ENCODE measurements at regions of chr20 and their contacts with region 1.

Region 1: DNA sequence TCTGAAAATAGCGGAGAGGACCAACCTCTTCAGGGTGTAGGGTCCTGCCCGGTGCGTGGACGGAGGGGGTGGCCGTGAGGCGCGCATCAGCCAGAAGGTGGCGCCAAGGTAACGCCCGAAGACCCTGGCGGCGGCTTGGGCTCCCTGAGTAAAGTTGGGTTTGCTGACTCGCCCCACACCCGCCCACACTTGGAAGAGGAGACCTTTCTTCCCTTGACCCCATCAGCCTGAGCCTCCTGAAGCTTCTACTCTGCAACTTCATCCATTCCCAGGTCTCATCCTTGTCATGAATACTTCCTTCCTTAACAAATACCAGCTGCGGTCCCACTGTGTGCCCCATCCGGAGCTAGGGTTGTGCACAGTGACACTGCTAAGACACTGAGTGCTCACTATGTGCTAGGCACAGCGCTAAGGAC is 14.6 kb downstream of the CD40 start:
- DNase-seq: peak; percentile 78
- ATAC-seq: peak; percentile 83
- H3K4me3 ChIP-seq: no peak overlapping the region
- H3K4me3 Mint-ChIP-seq: peak overlapping the region; percentile 4
- H3K27ac ChIP-seq: no peak overlapping the region
- H3K27ac Mint-ChIP-seq: peak overlapping the region; percentile 33
- H3K4me1 ChIP-seq: peaks cover 20 to 42% of the 10 kb centered on the region in 2 donors
- H3K4me1 Mint-ChIP-seq: peaks cover 48% of the 10 kb centered on the region
- H3K27me3 ChIP-seq: peaks cover 0 to 10% (median 0%) of the 10 kb centered on the region in 4 experiments
- H3K27me3 Mint-ChIP-seq: peaks cover 15% of the 10 kb centered on the region
- CTCF ChIP-seq: peak; percentile 87

Region 2: DNA sequence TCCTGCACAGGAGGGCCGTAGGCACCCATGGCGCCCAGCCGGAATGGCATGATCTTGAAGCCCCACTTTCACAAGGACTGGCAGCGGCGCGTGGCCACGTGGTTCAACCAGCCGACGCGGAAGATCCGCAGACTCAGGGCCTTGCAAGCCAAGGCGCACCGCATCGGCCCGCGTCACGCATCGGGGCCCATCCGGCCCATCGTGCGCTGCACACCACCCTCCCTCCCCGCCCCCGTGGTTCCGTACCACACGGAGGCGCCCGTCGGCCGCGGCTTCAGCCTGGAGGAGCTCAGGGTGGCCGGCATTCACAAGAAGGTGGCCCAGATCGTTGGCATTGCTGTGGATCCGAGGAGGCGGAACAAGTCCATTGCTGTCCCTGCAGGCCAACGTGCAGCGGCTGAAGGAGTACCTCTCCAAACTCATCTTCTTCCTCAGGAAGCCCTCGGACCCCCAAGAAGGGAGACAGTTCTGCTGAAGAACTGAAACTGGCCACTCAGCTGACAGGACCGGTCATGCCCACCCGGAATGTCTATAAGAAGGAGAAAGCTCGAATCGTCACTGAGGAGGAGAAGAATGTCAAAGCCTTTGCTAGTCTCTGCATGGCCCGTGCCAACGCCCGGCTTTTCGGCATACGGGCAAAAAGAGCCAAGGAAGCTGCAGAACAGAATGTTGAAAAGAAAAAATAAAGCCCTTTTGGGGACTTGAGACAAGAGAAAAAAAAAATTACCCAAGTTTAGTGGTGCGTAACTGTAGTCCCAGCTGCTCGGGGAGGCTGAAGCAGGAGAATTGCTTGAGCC is 33.0 kb before region 1 on chr20:
- CTCF ChIA-PET with region 1: interaction called, 20 read pairs
- POLR2A ChIA-PET with region 1: interaction called, 6 read pairs
- intact Hi-C with region 1: loop called (anchors 2 kb)
- DNase-seq: peak; percentile 86
- ATAC-seq: peak; percentile 99
- H3K4me3 ChIP-seq: peak overlapping the region in 4 of 5 experiments; percentile 14 to 49 (median 32)
- H3K4me3 Mint-ChIP-seq: peak overlapping the region; percentile 79
- H3K27ac ChIP-seq: no peak overlapping the region
- H3K27ac Mint-ChIP-seq: peak overlapping the region; percentile 56
- H3K4me1 ChIP-seq: peaks cover 8 to 12% of the 10 kb centered on the region in 2 donors
- H3K4me1 Mint-ChIP-seq: peaks cover 15% of the 10 kb centered on the region
- H3K27me3 ChIP-seq: no peaks in the 10 kb centered on the region
- H3K27me3 Mint-ChIP-seq: peaks cover 4% of the 10 kb centered on the region
- CTCF ChIP-seq: peak; percentile 45

Region 3: DNA sequence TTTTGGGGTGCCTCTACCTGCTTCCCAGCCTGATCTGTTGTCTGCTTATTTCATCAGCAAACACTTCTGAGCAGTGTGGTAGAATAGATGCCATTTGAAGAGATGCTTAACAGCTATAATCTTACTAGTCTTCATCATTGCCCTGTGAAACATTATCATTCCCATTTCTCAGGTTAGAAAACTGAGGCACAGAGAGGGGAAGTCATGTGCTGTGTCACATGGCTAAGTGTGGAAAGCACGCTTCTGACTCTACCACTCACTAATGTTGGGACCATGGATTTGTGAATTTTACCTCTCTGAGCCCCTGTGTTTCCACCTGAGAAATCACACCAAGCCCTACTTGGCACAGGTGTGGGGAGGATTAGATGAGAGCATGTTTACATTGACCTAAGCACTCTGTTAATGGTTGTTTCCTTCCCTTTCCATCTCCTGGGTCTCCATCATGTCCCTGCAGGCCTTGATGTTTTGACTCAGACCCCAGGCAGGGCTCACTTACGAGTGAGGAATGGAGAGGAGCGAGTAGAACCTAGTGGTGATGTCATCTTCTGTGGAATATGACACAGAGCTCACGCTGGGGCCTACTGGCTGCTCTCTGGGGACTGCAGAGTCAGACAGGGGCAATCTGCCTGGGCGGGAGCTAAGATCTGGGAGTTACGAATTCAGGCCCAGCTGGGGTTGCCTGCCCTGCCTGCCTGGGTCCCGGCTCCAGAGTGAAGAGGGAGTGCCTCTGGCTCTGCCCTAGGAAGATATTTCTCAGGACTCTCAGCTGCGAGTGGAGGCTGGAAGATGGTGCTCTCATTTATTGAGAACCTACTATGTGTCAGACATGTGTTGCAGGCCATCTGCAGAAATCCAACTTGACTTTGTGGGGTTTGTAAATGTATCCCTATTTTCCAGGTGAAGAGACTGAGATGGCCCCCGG is 111.3 kb after region 1 on chr20:
- CTCF ChIA-PET with region 1: no interaction called
- POLR2A ChIA-PET with region 1: no interaction called
- intact Hi-C with region 1: no loop called
- DNase-seq: no peak
- ATAC-seq: no peak
- H3K4me3 ChIP-seq: no peak overlapping the region
- H3K4me3 Mint-ChIP-seq: no peak overlapping the region
- H3K27ac ChIP-seq: no peak overlapping the region
- H3K27ac Mint-ChIP-seq: no peak overlapping the region
- H3K4me1 ChIP-seq: no peaks in the 10 kb centered on the region
- H3K4me1 Mint-ChIP-seq: no peaks in the 10 kb centered on the region
- H3K27me3 ChIP-seq: peaks cover 0 to 43% (median 16%) of the 10 kb centered on the region in 4 experiments
- H3K27me3 Mint-ChIP-seq: peaks cover 58% of the 10 kb centered on the region
- CTCF ChIP-seq: no peak

Region 4: DNA sequence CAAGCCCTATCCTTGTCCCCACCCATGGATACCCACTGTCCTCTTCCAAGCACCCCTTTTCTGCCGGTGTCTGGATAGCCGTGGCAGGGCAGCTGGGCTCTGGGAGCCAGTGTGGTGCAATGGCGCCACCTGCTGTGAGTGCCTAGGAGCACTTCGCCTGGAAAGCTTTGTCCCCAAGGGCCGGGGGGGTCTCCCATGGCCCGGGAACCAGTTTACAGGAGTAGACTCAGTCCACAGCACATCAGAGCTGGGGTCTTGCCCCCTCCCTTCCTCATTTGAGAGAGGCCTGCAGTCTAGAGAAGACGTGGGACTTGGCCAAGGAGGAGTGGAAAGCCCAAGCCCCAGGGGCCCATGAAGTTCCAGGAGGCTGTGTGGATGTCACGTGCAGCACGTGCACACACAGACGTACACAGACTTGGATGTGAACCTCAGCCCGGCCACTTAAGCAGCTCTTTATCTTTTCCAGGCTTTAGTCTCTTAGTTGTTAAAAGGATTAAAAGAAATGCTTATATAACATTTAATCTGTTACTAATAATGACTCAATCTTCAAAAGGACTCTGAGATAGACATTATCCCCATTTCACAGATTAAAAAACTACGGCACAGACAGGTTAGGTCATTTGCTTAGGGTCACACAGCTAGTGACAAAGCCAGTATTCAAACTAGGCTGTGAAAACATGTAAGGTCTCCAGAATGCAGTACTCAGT is 216.5 kb after region 1 on chr20:
- CTCF ChIA-PET with region 1: interaction called, 6 read pairs
- POLR2A ChIA-PET with region 1: no interaction called
- intact Hi-C with region 1: loop called (anchors 5 kb)
- DNase-seq: peak; percentile 45
- ATAC-seq: peak; percentile 28
- H3K4me3 ChIP-seq: no peak overlapping the region
- H3K4me3 Mint-ChIP-seq: no peak overlapping the region
- H3K27ac ChIP-seq: no peak overlapping the region
- H3K27ac Mint-ChIP-seq: peak overlapping the region; percentile 65
- H3K4me1 ChIP-seq: peaks cover 9 to 25% of the 10 kb centered on the region in 2 donors
- H3K4me1 Mint-ChIP-seq: peaks cover 27% of the 10 kb centered on the region
- H3K27me3 ChIP-seq: no peaks in the 10 kb centered on the region
- H3K27me3 Mint-ChIP-seq: no peaks in the 10 kb centered on the region
- CTCF ChIP-seq: peak; percentile 63

Region 5: DNA sequence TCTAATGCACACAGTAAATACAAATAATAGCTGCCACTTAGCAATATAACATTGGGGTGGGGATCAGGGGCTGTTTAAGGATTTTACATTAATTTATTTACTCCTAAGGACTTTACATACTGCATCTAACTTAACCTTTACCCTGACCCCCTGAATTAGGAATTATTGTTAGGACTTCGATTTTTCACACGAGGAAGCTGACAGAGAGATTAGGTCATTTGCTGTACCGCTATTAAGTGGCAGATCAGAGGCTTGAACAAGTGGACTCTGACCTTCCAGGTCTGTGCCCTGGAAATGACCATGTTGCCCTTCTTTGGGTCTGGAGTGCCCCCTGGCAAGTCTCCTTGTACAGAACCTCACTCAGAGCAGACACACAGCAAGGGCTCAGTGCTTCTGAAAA is 278.9 kb after region 1 on chr20:
- CTCF ChIA-PET with region 1: interaction called, 14 read pairs
- POLR2A ChIA-PET with region 1: no interaction called
- intact Hi-C with region 1: loop called (anchors 1 kb)
- DNase-seq: no peak
- ATAC-seq: no peak
- H3K4me3 ChIP-seq: no peak overlapping the region
- H3K4me3 Mint-ChIP-seq: no peak overlapping the region
- H3K27ac ChIP-seq: no peak overlapping the region
- H3K27ac Mint-ChIP-seq: no peak overlapping the region
- H3K4me1 ChIP-seq: peaks cover 6 to 16% of the 10 kb centered on the region in 2 donors
- H3K4me1 Mint-ChIP-seq: peaks cover 18% of the 10 kb centered on the region
- H3K27me3 ChIP-seq: peaks cover 0 to 24% (median 11%) of the 10 kb centered on the region in 4 experiments
- H3K27me3 Mint-ChIP-seq: peaks cover 17% of the 10 kb centered on the region
- CTCF ChIP-seq: no peak